Panc1 (cell line): ENCODE measurements at regions of chr17 and their contacts with region 1.

Region 1: DNA sequence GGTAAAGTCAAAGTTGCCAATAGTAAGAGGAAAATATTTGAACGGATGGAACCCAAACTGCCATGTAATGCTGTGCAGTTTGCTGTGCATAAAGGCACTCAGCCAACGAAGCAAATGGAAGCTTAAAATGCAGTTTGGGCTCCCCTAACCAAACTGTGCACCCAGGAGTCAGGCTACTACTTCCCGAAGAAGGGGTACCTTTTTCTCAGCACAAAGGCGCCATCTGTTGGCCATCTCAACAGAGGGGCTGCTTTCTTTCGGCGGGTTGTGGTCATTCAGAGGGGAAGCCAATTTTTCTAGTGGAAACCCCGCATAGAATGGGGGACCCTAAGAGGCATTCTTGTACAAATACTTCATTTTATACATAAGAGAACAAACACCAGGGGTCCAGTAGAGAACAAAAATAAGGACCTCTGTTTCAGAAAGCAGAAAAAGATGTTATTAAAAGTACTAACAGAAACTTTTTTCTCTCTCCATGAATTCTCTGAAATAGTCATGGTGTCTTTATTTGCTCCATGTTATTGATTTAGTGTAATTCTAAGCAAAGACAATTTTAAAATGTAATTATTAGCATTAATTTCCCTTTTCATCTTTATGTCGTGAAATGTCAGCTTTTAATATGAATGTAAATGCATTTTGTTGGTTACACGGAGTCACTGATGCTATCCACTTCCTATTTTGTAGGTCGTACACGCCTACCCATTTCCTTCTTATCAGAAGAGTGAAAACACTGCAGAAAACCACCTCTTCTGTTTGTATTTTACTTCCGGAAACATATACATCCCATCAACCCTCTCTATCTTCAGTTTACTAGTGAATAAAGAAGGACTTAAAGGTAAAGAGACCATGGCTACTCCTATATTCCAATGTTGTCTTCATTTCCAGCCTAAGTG is 453.3 kb downstream of the KCNJ2 start:
- DNase-seq: no peak
- ATAC-seq: no peak
- H3K4me3 ChIP-seq: no peak overlapping the region
- H3K27ac ChIP-seq: no peak overlapping the region
- H3K4me1 ChIP-seq: no peaks in the 10 kb centered on the region
- H3K27me3 ChIP-seq: no peaks in the 10 kb centered on the region; the same call in 1 of the 2 replicates
- CTCF ChIP-seq: peak; percentile 83

Region 2: GRCh38 chr17:69567130-69567529 is 1055.5 kb before region 1 on chr17:
- CTCF ChIA-PET with region 1: no interaction called
- POLR2A ChIA-PET with region 1: no interaction called
- in situ Hi-C with region 1: no loop called
- intact Hi-C with region 1: loop called (anchors 10 kb)
- DNase-seq: no peak
- ATAC-seq: no peak
- H3K4me3 ChIP-seq: no peak overlapping the region
- H3K27ac ChIP-seq: no peak overlapping the region
- H3K4me1 ChIP-seq: no peaks in the 10 kb centered on the region; the same call in 1 of the 2 replicates
- H3K27me3 ChIP-seq: no peaks in the 10 kb centered on the region
- CTCF ChIP-seq: no peak

Region 3: DNA sequence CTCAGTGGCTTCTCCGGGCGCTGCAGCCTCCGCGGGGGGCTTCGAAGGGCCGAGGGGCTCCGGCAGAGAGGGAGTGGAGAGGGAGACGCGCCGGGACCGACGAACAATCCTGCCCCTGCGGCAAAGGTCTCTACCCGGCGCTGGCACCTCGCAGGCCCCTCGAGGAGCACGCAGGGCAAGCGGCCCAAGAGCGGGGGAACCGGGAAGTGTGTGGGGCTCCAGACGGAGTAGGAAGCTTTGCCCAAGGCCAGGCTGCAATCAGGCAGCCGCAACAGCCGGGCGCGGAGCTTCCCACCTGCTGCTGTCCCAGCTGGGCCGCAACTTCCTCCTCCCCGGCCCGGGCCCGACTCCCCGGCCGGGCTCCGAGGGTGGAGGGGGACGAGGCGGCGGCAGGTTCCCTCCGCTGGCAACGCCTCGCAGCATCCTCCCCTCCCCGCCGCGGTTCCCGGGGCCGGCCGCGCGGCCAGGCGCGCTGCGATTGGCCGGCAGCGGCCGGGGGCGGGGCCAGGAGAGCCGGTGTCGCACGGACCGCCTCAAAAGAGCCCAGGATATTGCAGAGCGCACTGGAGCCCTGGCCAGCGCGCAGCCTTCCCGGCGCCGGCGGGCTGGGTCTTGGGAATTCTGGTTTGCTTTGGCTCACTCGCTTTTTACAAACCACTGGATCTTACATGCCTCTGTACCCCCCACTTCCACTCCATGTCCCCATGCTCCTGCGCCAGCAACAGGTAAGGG is 453.5 kb before region 1 on chr17 and contains the start of gene KCNJ2:
- CTCF ChIA-PET with region 1: interaction called, 4 read pairs
- POLR2A ChIA-PET with region 1: no interaction called
- in situ Hi-C with region 1: no loop called
- intact Hi-C with region 1: loop called (anchors 5 kb)
- DNase-seq: no peak
- ATAC-seq: peak; percentile 97
- H3K4me3 ChIP-seq: peak within 1 kb of the TSS; percentile 64 to 67
- H3K27ac ChIP-seq: peak within 1 kb of the TSS; percentile 72
- H3K4me1 ChIP-seq: peaks cover 12% of the 10 kb centered on the region
- H3K27me3 ChIP-seq: peaks cover 32% of the 10 kb centered on the region
- CTCF ChIP-seq: no peak
- total RNA-seq, gene KCNJ2: 1.5 TPM

Region 4: GRCh38 chr17:70808596-70808995 is 186.0 kb after region 1 on chr17:
- CTCF ChIA-PET with region 1: no interaction called
- POLR2A ChIA-PET with region 1: no interaction called
- in situ Hi-C with region 1: no loop called
- intact Hi-C with region 1: no loop called
- DNase-seq: no peak
- ATAC-seq: no peak
- H3K4me3 ChIP-seq: no peak overlapping the region
- H3K27ac ChIP-seq: no peak overlapping the region
- H3K4me1 ChIP-seq: no peaks in the 10 kb centered on the region
- H3K27me3 ChIP-seq: no peaks in the 10 kb centered on the region
- CTCF ChIP-seq: peak; percentile 54